PC-3 (cell line): ENCODE measurements at regions of chr12 and their contacts with region 1.

Region 1: GRCh38 chr12:26126340-26127284 is 1.8 kb upstream of the BHLHE41 start:
- DNase-seq: peak; percentile 94
- ATAC-seq: peak; percentile 56
- H3K4me3 ChIP-seq: peak overlapping the region; percentile 77
- H3K27ac ChIP-seq: peak overlapping the region; percentile 89
- H3K4me1 ChIP-seq: peaks cover 23% of the 10 kb centered on the region
- H3K27me3 ChIP-seq: no peaks in the 10 kb centered on the region
- CTCF ChIP-seq: no peak

Region 2: DNA sequence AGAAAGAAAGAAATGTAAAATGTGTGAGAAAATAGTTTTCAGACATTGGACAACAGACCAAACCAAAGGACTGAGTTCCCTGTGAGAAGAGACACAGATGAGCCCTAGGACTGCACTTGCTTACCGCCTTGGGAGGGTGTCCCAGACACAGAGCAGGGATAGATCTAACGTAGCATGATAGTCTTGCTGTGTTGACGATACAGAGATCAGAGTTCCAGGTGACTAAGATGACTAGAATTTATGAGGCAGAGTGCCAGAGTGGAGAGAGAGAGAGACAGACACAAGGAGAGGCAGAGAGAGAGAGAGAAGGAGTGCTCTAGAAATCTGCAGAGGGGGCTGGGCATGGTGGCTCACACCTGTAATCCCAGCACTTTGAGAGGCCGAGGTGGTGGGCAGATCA is 425.3 kb before region 1 on chr12:
- CTCF ChIA-PET with region 1: no interaction called
- POLR2A ChIA-PET with region 1: no interaction called
- intact Hi-C with region 1: no loop called
- DNase-seq: peak; percentile 80
- ATAC-seq: peak; percentile 74
- H3K4me3 ChIP-seq: no peak overlapping the region
- H3K27ac ChIP-seq: no peak overlapping the region
- H3K4me1 ChIP-seq: peaks cover 13% of the 10 kb centered on the region
- H3K27me3 ChIP-seq: no peaks in the 10 kb centered on the region
- CTCF ChIP-seq: no peak

Region 3: GRCh38 chr12:26091822-26092221 is 34.8 kb before region 1 on chr12:
- CTCF ChIA-PET with region 1: no interaction called
- POLR2A ChIA-PET with region 1: interaction called, 17 read pairs
- intact Hi-C with region 1: no loop called
- DNase-seq: peak; percentile 47
- ATAC-seq: peak; percentile 60
- H3K4me3 ChIP-seq: no peak overlapping the region
- H3K27ac ChIP-seq: no peak overlapping the region
- H3K4me1 ChIP-seq: peaks cover 30% of the 10 kb centered on the region
- H3K27me3 ChIP-seq: no peaks in the 10 kb centered on the region
- CTCF ChIP-seq: peak; percentile 65

Region 4: DNA sequence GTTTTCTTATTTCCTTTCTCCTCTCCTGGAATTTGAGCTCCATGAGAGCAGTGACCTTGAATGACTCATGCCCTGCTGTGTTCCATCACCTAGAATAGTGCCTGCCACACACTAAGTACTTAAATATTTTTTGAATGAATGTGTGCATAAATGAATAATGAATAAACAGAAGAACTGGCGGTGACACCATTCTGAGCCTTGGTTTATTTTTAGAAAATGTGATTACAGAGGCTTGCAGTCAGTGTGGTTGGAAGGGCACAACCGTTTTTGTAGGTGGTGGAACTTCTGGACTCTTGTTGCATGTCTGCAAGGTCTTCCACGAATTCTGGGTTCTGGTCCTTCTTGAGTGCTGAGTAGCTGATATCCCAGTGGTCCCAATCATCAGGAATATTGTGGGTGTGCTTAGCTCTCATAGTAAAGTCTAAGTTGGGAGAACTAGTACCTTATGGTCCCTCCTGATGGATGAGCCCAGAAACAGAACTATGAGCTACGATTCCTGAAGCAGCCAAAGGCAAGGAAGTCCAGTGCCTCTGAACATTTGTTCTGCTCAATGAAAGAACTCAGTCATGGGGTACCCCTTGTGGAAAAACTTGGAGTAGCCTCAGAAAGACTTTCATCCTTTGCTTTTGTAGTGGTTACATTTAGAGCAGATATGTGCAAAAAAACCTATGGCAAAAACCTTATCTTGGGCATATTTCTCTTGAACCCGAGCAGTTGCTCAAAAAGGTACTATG is 27.0 kb after region 1 on chr12:
- CTCF ChIA-PET with region 1: interaction called, 5 read pairs
- POLR2A ChIA-PET with region 1: interaction called, 17 read pairs
- intact Hi-C with region 1: loop called (anchors 1 kb)
- DNase-seq: peak; percentile 99
- ATAC-seq: peak; percentile 95
- H3K4me3 ChIP-seq: peak overlapping the region; percentile 22
- H3K27ac ChIP-seq: peak overlapping the region; percentile 88
- H3K4me1 ChIP-seq: peaks cover 37% of the 10 kb centered on the region
- H3K27me3 ChIP-seq: no peaks in the 10 kb centered on the region
- CTCF ChIP-seq: peak; percentile 46

Region 5: DNA sequence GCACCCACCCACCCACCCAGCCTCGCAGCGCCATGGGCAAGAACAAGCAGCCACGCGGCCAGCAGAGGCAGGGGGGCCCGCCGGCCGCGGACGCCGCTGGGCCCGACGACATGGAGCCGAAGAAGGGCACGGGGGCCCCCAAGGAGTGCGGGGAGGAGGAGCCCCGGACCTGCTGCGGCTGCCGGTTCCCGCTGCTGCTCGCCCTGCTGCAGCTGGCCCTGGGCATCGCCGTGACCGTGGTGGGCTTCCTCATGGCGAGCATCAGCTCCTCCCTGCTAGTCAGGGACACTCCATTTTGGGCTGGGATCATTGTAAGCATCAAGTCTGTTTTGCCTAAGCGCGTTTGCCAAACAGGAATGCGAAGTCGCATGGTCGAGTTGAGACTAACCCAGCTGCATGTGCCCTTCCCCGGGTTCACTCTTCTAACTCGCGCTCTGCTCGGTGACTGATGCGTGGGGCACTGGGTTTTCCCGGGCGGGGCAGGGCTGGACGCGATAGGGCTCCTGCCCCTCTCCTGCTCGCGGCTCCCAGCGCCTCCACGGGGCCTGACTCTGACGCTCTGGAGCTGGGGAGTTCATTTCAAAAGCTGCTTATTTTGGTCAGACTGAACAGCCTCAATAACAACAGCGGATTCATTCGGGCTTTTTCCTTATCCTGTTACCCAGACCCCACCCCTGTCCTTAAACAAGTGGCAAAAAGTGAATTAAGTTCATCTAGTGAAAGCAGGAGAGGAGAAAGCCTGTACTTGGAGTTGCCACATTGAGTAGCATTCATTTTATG is 69.2 kb after region 1 on chr12:
- CTCF ChIA-PET with region 1: interaction called, 3 read pairs
- POLR2A ChIA-PET with region 1: interaction called, 10 read pairs
- intact Hi-C with region 1: loop called (anchors 2 kb)
- DNase-seq: peak; percentile 74
- ATAC-seq: peak; percentile 86
- H3K4me3 ChIP-seq: peak overlapping the region; percentile 69
- H3K27ac ChIP-seq: peak overlapping the region; percentile 50
- H3K4me1 ChIP-seq: peaks cover 36% of the 10 kb centered on the region
- H3K27me3 ChIP-seq: no peaks in the 10 kb centered on the region
- CTCF ChIP-seq: 0 out of 2 replicates have a peak, but pooled peaks have one; percentile 12

Region 6: DNA sequence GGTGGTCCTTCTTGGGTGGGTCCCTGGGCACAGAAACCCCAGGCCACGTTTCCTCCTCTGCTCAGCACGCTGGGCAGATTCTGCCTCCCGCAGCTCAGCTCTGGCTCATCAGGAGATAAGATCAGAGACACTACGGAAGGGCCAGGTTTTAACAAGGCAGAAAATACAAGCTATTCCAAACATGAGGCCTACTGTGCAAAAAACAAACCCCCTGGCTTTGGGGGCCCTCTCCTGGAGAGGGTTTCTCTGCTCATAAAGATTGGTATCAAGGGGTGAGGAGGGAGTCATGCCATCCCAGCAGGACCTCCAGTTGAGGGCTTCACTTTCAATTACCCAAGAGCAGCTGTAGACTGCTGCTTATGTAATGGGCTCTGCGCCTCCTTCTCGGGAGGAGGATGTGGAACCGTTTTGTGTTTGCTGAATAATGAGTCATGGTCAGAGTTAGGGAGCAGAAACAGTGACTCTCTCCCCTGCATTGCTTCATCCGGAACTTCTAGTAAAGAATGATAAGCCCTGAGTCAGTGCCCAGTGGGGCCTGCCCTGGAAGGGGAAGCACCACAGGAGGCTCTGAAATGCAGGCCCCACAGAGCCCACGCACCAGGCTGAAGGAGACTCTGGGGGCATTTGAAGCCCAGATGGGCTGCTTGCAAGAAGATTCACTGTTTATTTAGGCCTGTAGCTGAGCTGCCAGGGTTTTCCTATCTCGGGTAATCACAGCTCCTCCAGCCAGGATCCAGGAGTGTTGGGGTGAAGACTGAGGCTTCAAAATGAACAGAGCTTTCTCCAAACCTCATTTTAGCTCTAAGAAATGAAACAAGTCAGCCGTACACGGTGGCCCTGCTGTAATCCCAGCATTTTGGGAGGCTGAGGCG is 148.1 kb after region 1 on chr12:
- CTCF ChIA-PET with region 1: interaction called, 10 read pairs
- POLR2A ChIA-PET with region 1: interaction called, 42 read pairs
- intact Hi-C with region 1: loop called (anchors 1 kb)
- DNase-seq: peak; percentile 100
- ATAC-seq: peak; percentile 92
- H3K4me3 ChIP-seq: peak overlapping the region; percentile 5; the same call in 1 of the 2 replicates
- H3K27ac ChIP-seq: peak overlapping the region; percentile 94
- H3K4me1 ChIP-seq: peaks cover 57% of the 10 kb centered on the region
- H3K27me3 ChIP-seq: no peaks in the 10 kb centered on the region
- CTCF ChIP-seq: peak; percentile 83

Region 7: DNA sequence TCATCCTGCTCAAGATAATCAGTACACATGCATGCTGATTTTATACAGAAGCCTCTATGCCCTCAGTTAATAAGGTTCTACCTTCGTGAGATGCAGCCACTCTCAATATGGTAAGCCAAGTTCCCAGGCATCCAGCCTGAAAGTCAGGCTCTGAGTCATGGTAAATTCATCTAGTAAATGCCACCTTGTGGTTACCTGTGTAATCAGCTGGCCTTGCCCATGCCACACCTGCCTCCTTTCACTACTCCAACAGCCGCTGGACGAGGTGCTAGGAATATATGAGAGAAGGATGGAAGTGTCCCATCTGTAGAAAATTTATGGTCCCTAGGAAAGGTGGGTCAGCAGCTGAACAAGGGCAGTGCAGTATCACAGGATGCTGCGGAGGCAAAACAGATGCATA is 276.0 kb after region 1 on chr12:
- CTCF ChIA-PET with region 1: interaction called, 6 read pairs
- POLR2A ChIA-PET with region 1: no interaction called
- intact Hi-C with region 1: loop called (anchors 1 kb)
- DNase-seq: peak; percentile 100
- ATAC-seq: peak; percentile 98
- H3K4me3 ChIP-seq: peak overlapping the region; percentile 24
- H3K27ac ChIP-seq: peak overlapping the region; percentile 91
- H3K4me1 ChIP-seq: peaks cover 31% of the 10 kb centered on the region
- H3K27me3 ChIP-seq: no peaks in the 10 kb centered on the region
- CTCF ChIP-seq: peak; percentile 46

Region 8: DNA sequence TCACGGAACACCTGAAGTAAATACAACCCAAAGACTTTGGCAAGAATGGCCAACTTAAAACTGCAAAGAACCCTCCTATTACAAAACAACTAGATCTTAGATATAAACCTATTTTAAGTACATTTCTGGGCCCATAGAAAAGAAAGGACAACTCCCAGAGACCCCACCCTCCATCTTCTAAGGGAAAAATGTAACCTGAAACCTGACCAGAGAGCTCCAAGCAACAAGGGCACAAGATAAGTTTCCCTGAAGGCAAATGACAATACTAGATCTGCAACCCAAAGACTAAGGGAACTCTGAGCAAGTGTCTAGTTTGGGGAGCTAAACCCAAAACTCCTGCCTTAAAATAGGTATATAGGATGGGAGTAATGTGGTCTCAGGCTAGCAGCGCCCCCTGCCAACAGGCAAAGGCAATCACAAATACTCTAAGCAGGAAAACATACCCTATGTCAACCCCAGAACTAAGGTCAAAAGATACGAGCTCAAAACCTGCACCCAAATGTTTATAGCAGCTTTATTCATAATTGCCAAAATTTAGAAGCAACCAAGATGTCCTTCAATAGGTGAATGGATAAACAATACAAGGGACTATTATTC is 487.5 kb after region 1 on chr12:
- CTCF ChIA-PET with region 1: no interaction called
- POLR2A ChIA-PET with region 1: no interaction called
- intact Hi-C with region 1: loop called (anchors 2 kb)
- DNase-seq: peak; percentile 56
- ATAC-seq: peak; percentile 78
- H3K4me3 ChIP-seq: no peak overlapping the region
- H3K27ac ChIP-seq: no peak overlapping the region
- H3K4me1 ChIP-seq: no peaks in the 10 kb centered on the region
- H3K27me3 ChIP-seq: no peaks in the 10 kb centered on the region
- CTCF ChIP-seq: peak; percentile 95